B cell (primary cell): ENCODE measurements at regions of chr2 and their contacts with region 1.

Region 1: DNA sequence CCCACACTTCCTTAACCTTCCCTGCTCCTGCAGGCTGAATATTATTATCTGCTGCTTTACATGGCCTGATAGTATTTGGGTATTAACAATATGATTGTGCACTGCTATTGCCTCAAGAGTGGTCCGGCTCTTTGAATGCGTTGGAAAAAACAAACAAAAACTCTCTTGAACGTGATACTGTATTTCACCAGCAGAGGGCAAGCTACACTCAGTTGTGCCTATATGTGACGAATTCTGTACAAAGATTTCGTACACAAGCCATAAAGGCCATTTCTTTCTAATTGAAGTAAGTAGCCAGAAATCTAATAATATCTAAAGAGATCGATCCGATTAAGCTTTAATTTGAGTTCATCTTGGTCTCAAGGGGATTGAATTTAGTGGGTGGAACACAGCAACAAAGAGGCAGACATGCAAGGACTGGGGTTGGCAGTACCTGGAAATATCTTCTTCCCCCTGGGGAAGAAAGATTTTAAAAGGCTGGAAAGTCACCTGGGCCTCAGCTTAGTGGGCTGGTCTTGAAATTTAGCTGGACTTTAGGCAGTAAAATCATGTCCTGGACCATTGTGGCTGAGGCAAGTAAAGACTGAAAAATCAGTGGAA is 49.3 kb upstream of the RAB6D start:
- DNase-seq: peak; percentile 64
- ATAC-seq: peak; percentile 61
- H3K4me3 ChIP-seq: no peak overlapping the region
- H3K4me3 Mint-ChIP-seq: no peak overlapping the region
- H3K27ac ChIP-seq: no peak overlapping the region
- H3K27ac Mint-ChIP-seq: no peak overlapping the region
- H3K4me1 ChIP-seq: no peaks in the 10 kb centered on the region
- H3K4me1 Mint-ChIP-seq: no peaks in the 10 kb centered on the region
- H3K27me3 ChIP-seq: peaks cover 0 to 13% (median 4%) of the 10 kb centered on the region in 4 experiments
- H3K27me3 Mint-ChIP-seq: peaks cover 38% of the 10 kb centered on the region
- CTCF ChIP-seq: peak; percentile 96

Region 2: GRCh38 chr2:131521961-131522794 is 108.9 kb after region 1 on chr2:
- CTCF ChIA-PET with region 1: no interaction called
- POLR2A ChIA-PET with region 1: no interaction called
- intact Hi-C with region 1: loop called (anchors 10 kb)
- DNase-seq: no peak
- ATAC-seq: no peak
- H3K4me3 ChIP-seq: no peak overlapping the region
- H3K4me3 Mint-ChIP-seq: no peak overlapping the region
- H3K27ac ChIP-seq: no peak overlapping the region
- H3K27ac Mint-ChIP-seq: no peak overlapping the region
- H3K4me1 ChIP-seq: peaks cover 0 to 1% of the 10 kb centered on the region in 2 donors
- H3K4me1 Mint-ChIP-seq: no peaks in the 10 kb centered on the region
- H3K27me3 ChIP-seq: no peaks in the 10 kb centered on the region
- H3K27me3 Mint-ChIP-seq: no peaks in the 10 kb centered on the region
- CTCF ChIP-seq: no peak